Esophagus muscularis mucosa (tissue), 4 donors: ENCODE measurements at regions of chr13 and their contacts with region 1.

Region 1: DNA sequence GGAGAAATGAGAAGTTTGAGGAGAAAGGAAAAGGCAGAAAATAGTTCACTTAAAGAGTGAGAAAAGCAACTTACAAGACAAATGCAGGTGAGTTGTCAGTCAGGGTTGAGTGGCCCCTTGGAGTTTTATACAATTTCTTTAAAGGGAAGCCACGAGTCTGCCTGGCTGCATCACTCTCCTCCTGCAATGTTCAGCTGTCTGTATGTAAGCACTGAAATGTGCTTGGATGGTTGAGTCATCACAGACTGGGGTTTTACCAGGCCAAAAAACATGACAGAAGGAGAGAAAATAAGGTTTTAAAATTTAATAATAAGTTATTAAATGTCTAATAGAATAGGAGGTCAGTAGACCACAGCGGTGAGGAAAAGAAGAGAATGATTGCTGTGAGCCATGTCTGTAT is 51.0 kb upstream of the FGF14 start:
- DNase-seq: no peak
- H3K4me3 ChIP-seq: no peak overlapping the region
- H3K27ac ChIP-seq: no peak overlapping the region
- H3K4me1 ChIP-seq: no peaks in the 10 kb centered on the region
- H3K27me3 ChIP-seq: no peaks in the 10 kb centered on the region
- CTCF ChIP-seq: no peak
- EP300 ChIP-seq: no peak
- POLR2A ChIP-seq: no peak

Region 2: GRCh38 chr13:101942038-101942437 is 510.8 kb before region 1 on chr13:
- intact Hi-C with region 1: loop called (anchors 10 kb)
- DNase-seq: no peak
- H3K4me3 ChIP-seq: no peak overlapping the region
- H3K27ac ChIP-seq: no peak overlapping the region
- H3K4me1 ChIP-seq: peaks cover 0 to 9% (median 2%) of the 10 kb centered on the region in 4 donors
- H3K27me3 ChIP-seq: no peaks in the 10 kb centered on the region
- CTCF ChIP-seq: peak; percentile 65 to 74 (median 72)
- EP300 ChIP-seq: no peak
- POLR2A ChIP-seq: no peak

Region 3: DNA sequence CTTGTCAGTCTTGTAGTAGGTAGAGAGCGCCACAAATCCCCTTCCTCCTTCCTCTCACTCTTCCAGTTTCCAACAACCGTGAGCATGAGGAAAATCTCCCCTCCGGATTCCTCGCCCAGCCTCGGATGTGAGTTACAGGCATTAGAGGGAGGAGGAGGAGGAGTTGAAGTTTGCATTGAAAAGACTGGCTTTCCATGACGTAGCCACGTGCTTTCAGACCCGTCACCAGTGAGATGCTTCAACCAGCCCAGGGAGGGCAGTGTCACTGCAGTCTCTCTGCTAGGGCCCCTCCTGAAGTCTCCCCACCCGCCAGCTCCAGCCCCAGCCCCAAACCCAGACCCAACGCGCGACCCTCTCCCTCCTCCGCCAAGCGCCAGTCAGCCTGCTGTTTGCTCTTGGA is 50.5 kb before region 1 on chr13:
- intact Hi-C with region 1: loop called (anchors 5 kb)
- DNase-seq: no peak
- H3K4me3 ChIP-seq: peak overlapping the region; percentile 59 to 77 (median 66)
- H3K27ac ChIP-seq: peak overlapping the region; percentile 0 to 81 (median 74)
- H3K4me1 ChIP-seq: peaks cover 5 to 40% (median 27%) of the 10 kb centered on the region in 4 donors
- H3K27me3 ChIP-seq: peaks cover 0 to 32% (median 9%) of the 10 kb centered on the region in 4 donors
- CTCF ChIP-seq: no peak
- EP300 ChIP-seq: no peak
- POLR2A ChIP-seq: no peak